ENCODE measurements at regions of chr6 and their contacts with region 1.

Region 1: GRCh38 chr6:154306696-154307095 is 49.9 kb downstream of the IPCEF1 start:
- DNase-seq: peak; percentile 66
- ATAC-seq: peak; percentile 83
- H3K4me3 ChIP-seq: no peak overlapping the region
- H3K4me3 Mint-ChIP-seq: no peak overlapping the region
- H3K27ac ChIP-seq: peak overlapping the region in 1 of 2 donors; percentile 54
- H3K27ac Mint-ChIP-seq: peak overlapping the region; percentile 27
- H3K4me1 ChIP-seq: peaks cover 10 to 35% of the 10 kb centered on the region in 2 donors
- H3K4me1 Mint-ChIP-seq: peaks cover 21% of the 10 kb centered on the region
- H3K27me3 ChIP-seq: no peaks in the 10 kb centered on the region
- H3K27me3 Mint-ChIP-seq: peaks cover 5% of the 10 kb centered on the region
- CTCF ChIP-seq: no peak

Region 2: GRCh38 chr6:154012852-154013251 is 293.8 kb before region 1 on chr6:
- CTCF ChIA-PET with region 1: no interaction called
- POLR2A ChIA-PET with region 1: no interaction called
- intact Hi-C with region 1: no loop called
- DNase-seq: no peak
- ATAC-seq: no peak
- H3K4me3 ChIP-seq: no peak overlapping the region
- H3K4me3 Mint-ChIP-seq: no peak overlapping the region
- H3K27ac ChIP-seq: no peak overlapping the region
- H3K27ac Mint-ChIP-seq: no peak overlapping the region
- H3K4me1 ChIP-seq: no peaks in the 10 kb centered on the region
- H3K4me1 Mint-ChIP-seq: no peaks in the 10 kb centered on the region
- H3K27me3 ChIP-seq: no peaks in the 10 kb centered on the region
- H3K27me3 Mint-ChIP-seq: no peaks in the 10 kb centered on the region
- CTCF ChIP-seq: no peak

Region 3: DNA sequence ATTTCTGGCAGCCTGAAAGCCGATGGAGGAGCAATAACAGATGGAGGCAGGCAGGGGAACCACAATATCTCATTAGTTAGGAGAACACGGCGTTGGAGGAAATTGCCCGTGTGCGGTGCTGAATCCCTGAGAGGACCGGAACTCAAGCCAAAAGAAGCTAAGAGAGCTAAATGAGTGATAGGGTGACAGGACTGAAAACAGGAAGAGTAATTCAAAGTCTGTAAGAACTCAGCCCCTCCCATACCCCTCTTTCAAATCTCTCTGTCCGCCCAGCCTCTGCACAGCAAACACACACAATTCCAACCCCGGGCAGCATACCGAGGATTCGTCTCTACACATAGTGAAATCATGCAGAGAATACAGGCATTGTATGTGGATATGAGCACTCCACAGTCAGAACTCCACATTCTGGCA is 52.5 kb after region 1 on chr6:
- CTCF ChIA-PET with region 1: no interaction called
- POLR2A ChIA-PET with region 1: no interaction called
- intact Hi-C with region 1: loop called (anchors 5 kb)
- DNase-seq: no peak
- ATAC-seq: no peak
- H3K4me3 ChIP-seq: no peak overlapping the region
- H3K4me3 Mint-ChIP-seq: peak overlapping the region; percentile 7
- H3K27ac ChIP-seq: no peak overlapping the region
- H3K27ac Mint-ChIP-seq: no peak overlapping the region
- H3K4me1 ChIP-seq: peaks cover 23 to 30% of the 10 kb centered on the region in 2 donors
- H3K4me1 Mint-ChIP-seq: peaks cover 28% of the 10 kb centered on the region
- H3K27me3 ChIP-seq: peaks cover 0 to 4% (median 0%) of the 10 kb centered on the region in 4 experiments
- H3K27me3 Mint-ChIP-seq: peaks cover 14% of the 10 kb centered on the region
- CTCF ChIP-seq: no peak

Measured in B cell (primary cell).